GM12878 (cell line): ENCODE measurements at regions of chr1 and their contacts with region 1.

Region 1: DNA sequence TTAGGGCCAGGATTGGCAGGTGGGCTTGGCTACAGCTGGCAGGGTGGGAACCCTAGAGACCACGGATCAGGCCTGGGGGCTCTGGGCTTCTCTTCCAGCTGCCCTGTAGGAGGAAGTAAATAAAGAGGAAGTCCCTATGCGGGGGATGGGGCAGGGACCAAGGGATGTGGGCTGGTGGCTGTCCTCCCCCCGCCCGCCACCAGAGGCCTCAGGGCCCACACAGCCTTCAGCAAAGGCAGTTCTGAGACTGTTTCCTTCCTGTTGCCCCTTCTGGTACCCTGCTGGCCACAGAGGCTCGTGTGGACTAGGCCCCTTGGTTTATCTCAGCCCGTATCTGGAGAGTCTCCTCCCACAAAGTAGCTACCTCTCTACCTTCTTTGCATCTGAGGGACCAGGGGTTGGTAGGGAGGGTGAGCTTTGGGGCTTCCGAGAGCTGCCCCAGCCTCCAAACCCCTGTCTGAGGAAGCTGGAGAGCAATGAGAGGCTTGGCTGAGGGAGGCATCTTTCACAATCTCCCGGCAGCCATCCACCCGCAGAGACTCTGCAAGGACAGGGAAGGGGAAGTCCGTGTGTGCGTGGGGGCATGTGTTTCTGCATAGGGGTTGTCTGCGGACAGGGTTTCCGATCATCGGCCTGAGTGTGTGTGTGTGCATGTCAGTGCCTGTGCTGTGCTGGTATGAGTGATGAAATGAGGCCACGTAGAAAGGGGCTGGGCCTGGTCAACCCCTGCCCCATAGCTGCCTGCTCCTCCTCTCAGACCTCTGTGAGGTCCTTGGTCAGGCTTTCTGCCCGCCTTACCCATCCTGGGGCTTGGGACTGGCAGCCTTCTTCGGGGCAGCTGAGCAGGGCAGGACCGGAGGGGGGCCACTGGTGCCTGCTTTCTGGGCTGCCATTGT is 12.5 kb downstream of the RPS6KA1 start:
- DNase-seq: peak; percentile 88
- ATAC-seq: peak; percentile 76
- H3K4me3 ChIP-seq: peak overlapping the region; percentile 95
- H3K27ac ChIP-seq: peak overlapping the region; percentile 97
- H3K4me1 ChIP-seq: peaks cover 68% of the 10 kb centered on the region
- H3K27me3 ChIP-seq: no peaks in the 10 kb centered on the region
- CTCF ChIP-seq: peak; percentile 52 to 82 (median 71)
- EP300 ChIP-seq: peak in 1 of 2 experiments; percentile 59; a peak in 3 of 4 replicates
- POLR2A ChIP-seq: peak; percentile 80
- RAD21 ChIP-seq: no peak; the same call in 1 of the 2 replicates

Region 2: DNA sequence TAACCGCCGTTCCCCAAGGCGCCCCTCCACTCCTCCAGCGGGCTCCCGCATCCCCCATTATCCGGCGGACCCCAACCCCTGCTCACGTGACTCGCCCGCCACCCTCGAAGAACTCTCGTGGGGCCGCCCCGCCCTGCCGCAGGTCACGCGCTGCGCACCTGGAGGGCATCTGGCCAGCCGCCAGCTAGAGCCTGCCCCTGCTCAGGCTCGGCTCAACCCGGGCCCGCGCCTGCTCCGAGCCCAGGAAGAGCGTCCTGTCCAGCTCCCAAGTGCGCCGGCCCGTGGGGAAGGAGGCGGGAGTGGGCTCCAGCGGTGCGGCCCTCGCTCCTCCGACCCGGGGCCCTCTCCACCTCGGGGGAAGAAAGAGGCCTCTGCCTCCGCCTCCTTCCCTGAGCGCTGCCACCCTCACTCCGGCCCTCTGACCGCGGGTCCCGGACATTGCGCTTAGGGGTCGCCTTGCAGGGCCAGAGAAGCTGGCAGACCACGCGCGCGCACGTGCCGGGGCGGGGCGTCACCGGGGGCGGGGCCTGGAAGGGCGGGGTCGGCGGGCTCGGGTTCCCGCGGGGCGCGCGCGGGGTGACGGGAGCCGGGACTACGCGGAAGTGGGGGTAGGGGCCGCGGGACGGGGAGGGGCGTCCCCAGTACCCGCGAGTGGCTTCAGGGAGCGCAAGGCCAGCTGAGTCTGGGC is 41.4 kb before region 1 on chr1:
- CTCF ChIA-PET with region 1: interaction called, 43 read pairs
- POLR2A ChIA-PET with region 1: interaction called, 19 read pairs
- RAD21 ChIA-PET with region 1: interaction called, 28 read pairs
- SMC1A ChIA-PET with region 1: interaction called, 14 read pairs
- in situ Hi-C with region 1: no loop called
- intact Hi-C with region 1: loop called (anchors 1 kb)
- DNase-seq: peak; percentile 39
- ATAC-seq: peak; percentile 86
- H3K4me3 ChIP-seq: peak overlapping the region; percentile 89
- H3K27ac ChIP-seq: peak overlapping the region; percentile 95
- H3K4me1 ChIP-seq: peaks cover 14% of the 10 kb centered on the region
- H3K27me3 ChIP-seq: no peaks in the 10 kb centered on the region
- CTCF ChIP-seq: no peak
- EP300 ChIP-seq: peak in 1 of 2 experiments; percentile 36; a peak in 1 of 4 replicates
- POLR2A ChIP-seq: peak; percentile 97
- RAD21 ChIP-seq: no peak

Region 3: DNA sequence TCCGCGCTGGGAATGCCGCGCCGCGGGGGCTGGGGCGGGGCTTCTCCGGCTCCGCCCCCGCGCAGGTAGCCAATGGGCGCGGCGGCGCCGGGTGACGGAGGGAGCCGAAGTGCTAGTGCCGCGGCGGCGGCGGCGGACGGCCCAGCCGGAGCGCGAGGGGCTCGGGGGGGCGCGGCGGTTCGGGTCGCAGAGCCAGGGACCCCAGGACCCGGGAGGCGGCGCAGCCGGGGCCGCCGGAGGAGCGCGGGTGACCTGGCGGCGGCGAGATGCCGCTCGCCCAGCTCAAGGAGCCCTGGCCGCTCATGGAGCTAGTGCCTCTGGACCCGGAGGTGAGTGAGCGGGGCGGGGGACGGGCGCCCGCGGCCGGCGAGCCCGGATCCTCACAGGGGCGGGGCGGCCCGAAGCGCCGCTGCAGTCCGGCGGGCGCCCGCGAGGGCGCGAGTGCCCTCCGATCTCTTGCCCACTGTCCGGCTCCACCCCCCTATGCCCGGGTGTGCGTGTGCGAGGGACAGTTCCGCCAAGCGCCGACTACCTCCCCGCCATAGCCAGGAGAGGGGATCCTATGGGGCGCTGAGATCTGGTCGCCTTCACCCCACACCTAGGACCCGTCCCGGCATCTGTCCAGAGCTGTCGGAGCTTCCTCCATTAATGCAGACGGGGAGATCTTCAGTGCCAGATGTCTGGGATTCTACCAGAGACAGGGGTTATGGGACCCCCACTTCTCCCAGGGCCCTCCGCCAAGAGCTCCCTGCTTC is 12.2 kb before region 1 on chr1 and contains the start of gene RPS6KA1:
- CTCF ChIA-PET with region 1: interaction called, 90 read pairs
- POLR2A ChIA-PET with region 1: interaction called, 19 read pairs
- RAD21 ChIA-PET with region 1: interaction called, 15 read pairs
- SMC1A ChIA-PET with region 1: interaction called, 21 read pairs
- in situ Hi-C with region 1: no loop called
- intact Hi-C with region 1: no loop called
- DNase-seq: no peak
- ATAC-seq: peak; percentile 79
- H3K4me3 ChIP-seq: peak within 1 kb of the TSS; percentile 83
- H3K27ac ChIP-seq: peak within 1 kb of the TSS; percentile 57
- H3K4me1 ChIP-seq: peaks cover 17% of the 10 kb centered on the region; the same call in 1 of the 2 replicates
- H3K27me3 ChIP-seq: no peaks in the 10 kb centered on the region
- CTCF ChIP-seq: no peak
- EP300 ChIP-seq: no peak
- POLR2A ChIP-seq: 0 out of 2 replicates have a peak, but pooled peaks have one; percentile 45
- RAD21 ChIP-seq: no peak
- polyA plus RNA-seq, gene RPS6KA1: 5.0 to 9.9 TPM

Region 4: GRCh38 chr1:26593385-26593784 is 51.3 kb after region 1 on chr1:
- CTCF ChIA-PET with region 1: interaction called, 58 read pairs
- POLR2A ChIA-PET with region 1: interaction called, 3 read pairs
- RAD21 ChIA-PET with region 1: interaction called, 27 read pairs
- SMC1A ChIA-PET with region 1: interaction called, 53 read pairs
- in situ Hi-C with region 1: no loop called
- intact Hi-C with region 1: loop called (anchors 5 kb)
- DNase-seq: no peak
- ATAC-seq: no peak; the same call in 2 of the 3 replicates
- H3K4me3 ChIP-seq: no peak overlapping the region
- H3K27ac ChIP-seq: no peak overlapping the region
- H3K4me1 ChIP-seq: peaks cover 5% of the 10 kb centered on the region; the same call in 1 of the 2 replicates
- H3K27me3 ChIP-seq: no peaks in the 10 kb centered on the region
- CTCF ChIP-seq: no peak
- EP300 ChIP-seq: no peak
- POLR2A ChIP-seq: no peak
- RAD21 ChIP-seq: no peak